Colonic mucosa (tissue), 4 donors: ENCODE measurements at regions of chr3 and their contacts with region 1.

Region 1: GRCh38 chr3:12046406-12046805 is 42.2 kb downstream of the SYN2 start:
- DNase-seq: no peak
- H3K4me3 ChIP-seq: no peak overlapping the region
- H3K27ac ChIP-seq: no peak overlapping the region
- H3K4me1 ChIP-seq: no peaks in the 10 kb centered on the region
- H3K27me3 ChIP-seq: no peaks in the 10 kb centered on the region
- CTCF ChIP-seq: no peak

Region 2: GRCh38 chr3:11944052-11944673 is 102.2 kb before region 1 on chr3:
- intact Hi-C with region 1: loop called (anchors 5 kb)
- DNase-seq: peak; percentile 26
- H3K4me3 ChIP-seq: no peak overlapping the region
- H3K27ac ChIP-seq: no peak overlapping the region
- H3K4me1 ChIP-seq: no peaks in the 10 kb centered on the region
- H3K27me3 ChIP-seq: no peaks in the 10 kb centered on the region
- CTCF ChIP-seq: peak; percentile 47

Region 3: DNA sequence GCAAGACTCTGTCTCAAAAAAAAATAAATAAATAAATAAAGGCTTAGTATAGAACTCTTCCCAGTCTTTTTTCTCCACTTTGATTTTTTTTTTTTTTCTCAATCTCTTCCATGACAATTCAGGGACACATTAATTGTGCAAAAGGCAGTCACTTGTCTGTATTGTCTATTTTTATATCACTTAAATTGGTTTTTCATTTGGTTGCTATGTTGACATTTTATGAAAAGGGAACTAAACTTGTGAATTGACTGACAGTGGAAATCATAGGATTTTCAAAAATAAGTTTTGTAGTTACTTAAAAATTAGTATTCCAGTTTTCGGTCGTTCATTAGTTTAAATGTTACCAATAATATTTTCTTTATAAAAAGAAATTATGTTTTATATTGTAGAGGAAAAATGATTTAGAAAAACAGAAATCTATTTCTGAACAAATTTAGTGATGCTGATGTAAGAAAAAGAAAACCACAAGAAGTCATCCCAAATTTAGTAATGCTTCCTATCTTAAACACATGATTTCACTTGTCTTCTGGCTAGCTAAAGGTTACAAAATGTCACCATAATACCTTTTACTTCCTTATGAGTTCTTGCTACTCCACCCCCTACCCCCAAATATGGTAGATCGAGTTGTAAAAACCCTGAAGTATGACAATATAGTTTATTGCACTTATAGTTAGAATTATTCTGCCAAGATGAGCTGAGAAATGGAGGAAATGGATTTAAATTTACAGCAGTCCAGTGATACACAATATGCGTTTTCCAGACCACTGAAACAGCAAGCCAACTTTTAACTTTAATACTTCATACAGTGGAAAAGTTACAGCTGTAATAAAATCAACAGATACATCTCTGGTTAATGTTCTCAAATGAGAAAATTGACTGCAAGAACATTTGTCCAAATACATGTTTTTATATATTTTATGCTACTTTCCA is 279.4 kb after region 1 on chr3:
- intact Hi-C with region 1: no loop called
- DNase-seq: no peak
- H3K4me3 ChIP-seq: no peak overlapping the region
- H3K27ac ChIP-seq: no peak overlapping the region
- H3K4me1 ChIP-seq: peaks cover 6% of the 10 kb centered on the region
- H3K27me3 ChIP-seq: no peaks in the 10 kb centered on the region
- CTCF ChIP-seq: no peak